ENCODE measurements at regions of chr3 and their contacts with region 1.

Region 1: DNA sequence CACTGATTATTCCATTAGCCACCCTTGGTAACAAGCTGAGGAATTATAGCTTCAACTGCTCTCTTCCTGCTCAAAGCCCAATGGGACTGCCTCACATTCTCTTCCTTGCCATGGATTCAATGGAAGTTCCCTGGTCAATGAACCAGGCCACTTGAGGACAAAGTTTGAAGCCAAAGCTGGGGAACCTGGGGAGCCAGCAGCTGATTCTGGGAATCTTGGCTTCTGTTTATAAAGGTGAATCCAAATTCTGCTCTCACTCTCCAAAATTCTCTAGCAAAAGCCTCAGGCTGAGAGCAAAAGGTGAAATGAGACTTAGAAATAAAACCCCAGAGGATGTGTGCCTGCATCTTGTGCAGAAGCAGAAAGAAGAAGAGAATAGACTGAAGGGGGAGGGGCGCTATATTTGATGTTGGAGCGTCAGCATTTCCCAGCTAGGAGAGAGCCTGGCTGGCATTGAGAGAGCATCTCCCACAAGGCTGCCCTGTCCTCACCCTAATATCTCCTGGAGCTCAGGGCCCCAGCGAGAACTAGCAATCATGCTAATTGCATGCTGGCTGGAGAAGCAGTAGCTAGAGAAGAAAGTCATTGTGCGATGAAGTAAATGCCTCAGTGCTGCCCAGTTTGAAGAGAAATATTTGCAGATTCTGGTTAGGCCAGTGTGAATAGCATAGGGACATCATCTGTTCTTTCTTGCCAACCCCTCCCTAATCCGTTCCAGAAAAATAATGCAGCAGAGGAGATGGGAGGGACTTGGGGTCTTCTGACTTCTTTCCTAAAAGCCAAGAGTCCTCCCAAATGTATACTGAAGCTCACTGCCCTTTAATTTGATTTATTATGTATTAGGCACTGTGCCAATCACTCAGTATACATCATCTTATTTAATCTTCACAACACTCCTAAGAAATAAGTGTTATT is 34.9 kb upstream of the GAP43 start:
- DNase-seq: no peak
- ATAC-seq: no peak
- H3K4me3 ChIP-seq: no peak overlapping the region
- H3K27ac ChIP-seq: no peak overlapping the region
- H3K4me1 ChIP-seq: no peaks in the 10 kb centered on the region
- H3K27me3 ChIP-seq: no peaks in the 10 kb centered on the region
- CTCF ChIP-seq: no peak

Region 2: DNA sequence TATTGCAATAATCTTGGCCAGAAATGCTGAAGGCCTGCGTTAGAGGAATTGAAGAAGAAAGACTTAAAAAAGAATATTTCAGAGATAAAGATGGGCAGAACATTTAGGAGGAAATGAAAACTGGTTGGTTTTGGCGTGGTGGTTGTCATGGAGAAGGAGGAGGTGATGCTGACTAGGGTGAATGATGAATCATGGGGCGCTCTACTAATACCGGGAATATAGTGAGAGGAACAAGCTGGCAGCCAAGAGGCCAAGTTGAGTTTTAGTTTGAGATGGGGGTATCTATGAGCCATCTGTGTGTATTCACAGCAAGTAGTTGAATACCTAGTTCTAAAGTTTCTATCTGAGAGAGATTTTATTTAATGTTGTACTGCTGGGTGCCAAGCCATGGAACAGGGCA is 28.0 kb after region 1 on chr3:
- intact Hi-C with region 1: loop called in 1 of 2 experiments (anchors 1 kb)
- DNase-seq: no peak
- ATAC-seq: no peak
- H3K4me3 ChIP-seq: no peak overlapping the region
- H3K27ac ChIP-seq: no peak overlapping the region
- H3K4me1 ChIP-seq: no peaks in the 10 kb centered on the region
- H3K27me3 ChIP-seq: peaks cover 0 to 2% (median 0%) of the 10 kb centered on the region in 3 donors
- CTCF ChIP-seq: no peak